ENCODE measurements at regions of chr3 and their contacts with region 1.

Region 1: GRCh38 chr3:187986514-187986934 is 167.4 kb upstream of the LPP start:
- DNase-seq: no peak
- ATAC-seq: no peak

Region 2: GRCh38 chr3:187947927-187948682 is 38.4 kb before region 1 on chr3:
- intact Hi-C with region 1: loop called (anchors 1 kb)
- DNase-seq: no peak
- ATAC-seq: peak; percentile 90